PC-9 (cell line): ENCODE measurements at regions of chr9 and their contacts with region 1.

Region 1: GRCh38 chr9:77712533-77713130 is 64.5 kb upstream of the GNA14 start:
- DNase-seq: peak; percentile 45 to 76
- H3K4me3 ChIP-seq: no peak overlapping the region
- H3K27ac ChIP-seq: no peak overlapping the region
- H3K4me1 ChIP-seq: peaks cover 43% of the 10 kb centered on the region
- H3K27me3 ChIP-seq: no peaks in the 10 kb centered on the region
- CTCF ChIP-seq: no peak

Region 2: DNA sequence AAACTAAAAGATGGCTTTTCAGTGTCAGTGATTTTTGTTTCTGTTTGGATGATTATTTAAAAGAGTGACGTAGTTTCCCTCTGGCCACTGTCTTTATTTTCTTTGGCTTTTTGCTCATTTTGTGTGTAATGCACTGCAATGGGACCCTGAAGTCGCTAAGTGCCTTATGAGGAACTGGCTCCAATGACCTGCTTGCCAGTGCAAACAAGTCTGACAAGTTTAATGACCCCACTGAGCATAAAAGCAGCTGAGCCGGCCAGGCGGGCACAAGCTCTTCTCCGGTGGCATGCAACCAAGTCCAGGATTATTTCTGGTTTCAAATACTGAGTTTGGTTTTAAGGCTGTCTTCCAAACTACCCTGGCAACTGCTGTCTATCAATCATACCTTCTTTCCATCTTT is 48.9 kb before region 1 on chr9:
- CTCF ChIA-PET with region 1: no interaction called
- POLR2A ChIA-PET with region 1: interaction called, 3 read pairs
- intact Hi-C with region 1: loop called (anchors 5 kb)
- DNase-seq: peak; percentile 75 to 86
- H3K4me3 ChIP-seq: no peak overlapping the region; the same call in 1 of the 2 replicates
- H3K27ac ChIP-seq: 0 out of 2 replicates have a peak overlapping the region, but pooled peaks have one; percentile 3
- H3K4me1 ChIP-seq: peaks cover 21% of the 10 kb centered on the region
- H3K27me3 ChIP-seq: no peaks in the 10 kb centered on the region
- CTCF ChIP-seq: no peak

Region 3: GRCh38 chr9:77783518-77783917 is 70.9 kb after region 1 on chr9:
- CTCF ChIA-PET with region 1: no interaction called
- POLR2A ChIA-PET with region 1: no interaction called
- intact Hi-C with region 1: no loop called
- DNase-seq: no peak
- H3K4me3 ChIP-seq: no peak overlapping the region
- H3K27ac ChIP-seq: no peak overlapping the region
- H3K4me1 ChIP-seq: no peaks in the 10 kb centered on the region
- H3K27me3 ChIP-seq: no peaks in the 10 kb centered on the region
- CTCF ChIP-seq: no peak

Region 4: DNA sequence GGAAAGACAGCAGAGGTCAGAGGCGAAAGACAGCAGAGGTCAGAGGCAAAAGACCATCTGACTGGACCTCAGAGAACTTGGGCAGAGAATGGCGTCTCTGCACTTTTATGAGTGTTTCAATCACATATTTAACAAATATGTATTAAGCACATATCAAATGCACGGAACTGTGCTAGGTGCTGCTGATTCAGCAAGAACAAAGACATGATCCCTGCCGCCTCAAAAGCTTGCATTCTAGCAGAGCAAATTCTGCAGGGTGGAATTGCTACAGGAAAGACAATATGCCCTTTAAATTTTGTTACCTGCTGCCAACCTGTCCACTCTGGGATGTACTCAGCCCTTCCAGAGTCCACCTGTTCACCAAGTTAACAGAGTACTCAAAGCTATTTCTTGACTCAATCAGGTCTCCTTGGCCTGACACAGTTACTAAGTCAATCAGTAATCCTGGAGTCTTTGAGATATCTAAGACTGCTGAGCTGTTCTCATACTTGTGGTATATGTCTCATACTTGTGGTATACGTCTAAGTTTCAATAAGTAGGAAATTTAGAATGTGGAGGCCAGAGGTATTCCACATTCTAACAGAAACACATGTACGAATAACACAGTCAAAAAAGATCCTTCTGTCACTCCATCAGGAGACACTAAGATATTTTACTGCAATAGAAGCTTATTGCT is 187.2 kb after region 1 on chr9:
- CTCF ChIA-PET with region 1: no interaction called
- POLR2A ChIA-PET with region 1: no interaction called
- intact Hi-C with region 1: loop called (anchors 10 kb)
- DNase-seq: peak in 1 of 2 experiments; percentile 61
- H3K4me3 ChIP-seq: no peak overlapping the region
- H3K27ac ChIP-seq: no peak overlapping the region
- H3K4me1 ChIP-seq: peaks cover 39% of the 10 kb centered on the region
- H3K27me3 ChIP-seq: no peaks in the 10 kb centered on the region
- CTCF ChIP-seq: no peak